ENCODE measurements at regions of chr1 and their contacts with region 1.

Region 1: DNA sequence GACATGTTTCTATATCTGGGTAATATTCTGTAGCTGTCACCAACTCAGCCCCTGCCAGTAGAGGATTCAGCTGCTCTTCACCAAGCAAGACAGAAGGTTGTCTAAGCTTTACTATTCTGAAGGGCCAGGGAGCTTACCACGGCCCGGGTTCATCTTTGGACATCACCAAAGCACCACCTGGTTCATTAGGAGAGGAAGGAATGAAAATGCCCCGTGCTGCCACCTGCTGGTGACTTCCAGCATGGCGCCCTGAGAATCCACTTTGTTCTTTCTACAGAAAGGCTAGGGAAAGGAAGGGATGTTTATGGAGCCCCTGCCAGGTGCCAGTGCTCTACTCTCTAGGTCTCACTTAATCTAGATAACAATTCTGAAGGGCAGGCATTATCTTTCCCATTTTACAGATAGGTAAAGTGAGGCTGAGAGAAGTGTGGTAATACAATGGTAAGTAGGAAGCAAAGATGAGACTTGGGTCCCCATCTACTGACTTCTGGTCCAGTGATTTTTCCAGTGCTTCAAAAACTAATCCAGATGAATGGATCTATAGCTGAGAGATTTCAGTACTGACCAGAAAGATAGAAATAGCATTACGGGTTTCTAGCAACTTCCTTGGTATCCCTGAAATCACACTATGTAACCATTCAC is 79.5 kb downstream of the BEND5 start:
- DNase-seq: peak; percentile 57 to 75 (median 68)
- ATAC-seq: peak; percentile 85
- H3K4me3 ChIP-seq: no peak overlapping the region
- H3K27ac ChIP-seq: no peak overlapping the region
- H3K4me1 ChIP-seq: no peaks in the 10 kb centered on the region
- H3K27me3 ChIP-seq: 0 out of 5 replicates have a peak, but pooled peaks cover 0 to 6% of the 10 kb centered on the region in 2 experiments
- CTCF ChIP-seq: peak; percentile 70 to 90 (median 71)
- EP300 ChIP-seq: no peak
- POLR2A ChIP-seq: no peak
- RAD21 ChIP-seq: peak; percentile 17 to 53

Region 2: GRCh38 chr1:48572646-48573261 is 124.4 kb before region 1 on chr1:
- CTCF ChIA-PET with region 1: no interaction called
- POLR2A ChIA-PET with region 1: no interaction called
- in situ Hi-C with region 1: no loop called
- intact Hi-C with region 1: loop called (anchors 1 kb)
- DNase-seq: peak; percentile 37 to 49 (median 45)
- ATAC-seq: peak; percentile 91
- H3K4me3 ChIP-seq: no peak overlapping the region
- H3K27ac ChIP-seq: no peak overlapping the region
- H3K4me1 ChIP-seq: no peaks in the 10 kb centered on the region
- H3K27me3 ChIP-seq: no peaks in the 10 kb centered on the region
- CTCF ChIP-seq: peak; percentile 60 to 70 (median 65)
- EP300 ChIP-seq: no peak
- POLR2A ChIP-seq: no peak
- RAD21 ChIP-seq: peak; percentile 54 to 71